Activated T-helper 2 cell treated with anti-CD3 and anti-CD28 coated beads, Interferon-gamma antibody, Interleukin-2, Interleukin-4, amounts not matched to agents 10 μg/mL and 5 μg/mL and 100 μg/mL, durations not matched to agents 14 hours and 24 hours and 36 hours (primary cell): ENCODE measurements at regions of chrX and their contacts with region 1.

Region 1: DNA sequence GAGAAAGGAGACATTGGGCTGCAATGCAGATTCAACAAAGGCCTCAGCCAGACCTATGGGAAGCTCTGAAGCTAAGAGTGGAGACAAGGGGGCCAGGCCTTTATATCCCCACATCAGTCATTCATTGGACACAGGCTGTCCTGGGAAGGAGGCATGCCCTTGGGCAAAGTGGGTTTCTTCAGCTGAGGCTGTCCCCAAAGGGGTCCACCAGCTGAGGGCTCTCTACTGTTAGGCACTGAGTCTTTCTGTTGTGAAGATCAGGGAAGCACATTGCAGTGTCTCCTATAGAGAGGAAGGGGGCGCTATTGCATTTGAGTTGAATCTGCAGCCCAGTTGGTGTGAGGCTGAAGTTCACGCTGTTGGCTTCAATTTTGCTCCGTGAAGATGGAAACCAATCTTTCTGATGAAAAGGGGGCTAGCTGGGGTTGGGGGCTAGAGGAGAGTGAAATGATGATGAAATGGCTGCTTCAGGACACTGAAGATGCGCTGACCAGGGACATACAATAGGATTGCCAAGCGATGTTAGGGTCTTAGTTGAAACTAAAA is 48.0 kb downstream of the SLC25A5 start:
- DNase-seq: peak; percentile 17
- H3K4me3 Mint-ChIP-seq: no peak overlapping the region
- H3K27ac Mint-ChIP-seq: peak overlapping the region; percentile 26
- H3K4me1 Mint-ChIP-seq: peaks cover 4% of the 10 kb centered on the region
- H3K27me3 Mint-ChIP-seq: no peaks in the 10 kb centered on the region

Region 2: DNA sequence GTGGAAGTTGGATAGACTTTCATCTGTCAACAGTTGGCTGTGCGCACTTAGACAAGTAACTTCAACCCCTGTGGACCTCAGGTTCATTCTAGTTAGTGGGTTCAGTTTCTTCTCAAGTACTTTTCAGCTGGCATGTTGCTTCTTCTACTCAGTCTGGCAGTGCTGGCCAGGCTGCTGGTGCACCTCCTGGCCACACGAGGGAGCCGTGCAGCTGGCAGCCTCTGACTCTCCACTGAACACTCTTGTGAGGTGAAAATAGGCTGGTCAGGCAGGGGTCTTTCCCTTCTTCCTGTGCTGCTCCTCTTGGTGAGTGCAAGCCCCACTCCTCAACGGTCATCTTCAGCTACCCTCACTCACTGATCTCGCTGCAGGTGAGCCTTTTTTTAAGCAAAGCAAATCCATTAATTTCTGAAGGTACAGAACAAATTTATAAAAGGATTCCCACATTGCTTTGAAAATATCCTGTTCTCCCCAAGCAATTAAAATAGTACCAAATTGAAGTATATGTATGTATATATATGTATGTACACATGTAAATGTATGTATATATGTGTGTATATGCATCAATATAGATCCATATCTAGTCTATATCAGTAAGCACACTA is 511.2 kb before region 1 on chrX:
- intact Hi-C with region 1: no loop called
- DNase-seq: peak; percentile 13
- H3K4me3 Mint-ChIP-seq: no peak overlapping the region
- H3K27ac Mint-ChIP-seq: no peak overlapping the region
- H3K4me1 Mint-ChIP-seq: no peaks in the 10 kb centered on the region
- H3K27me3 Mint-ChIP-seq: no peaks in the 10 kb centered on the region

Region 3: DNA sequence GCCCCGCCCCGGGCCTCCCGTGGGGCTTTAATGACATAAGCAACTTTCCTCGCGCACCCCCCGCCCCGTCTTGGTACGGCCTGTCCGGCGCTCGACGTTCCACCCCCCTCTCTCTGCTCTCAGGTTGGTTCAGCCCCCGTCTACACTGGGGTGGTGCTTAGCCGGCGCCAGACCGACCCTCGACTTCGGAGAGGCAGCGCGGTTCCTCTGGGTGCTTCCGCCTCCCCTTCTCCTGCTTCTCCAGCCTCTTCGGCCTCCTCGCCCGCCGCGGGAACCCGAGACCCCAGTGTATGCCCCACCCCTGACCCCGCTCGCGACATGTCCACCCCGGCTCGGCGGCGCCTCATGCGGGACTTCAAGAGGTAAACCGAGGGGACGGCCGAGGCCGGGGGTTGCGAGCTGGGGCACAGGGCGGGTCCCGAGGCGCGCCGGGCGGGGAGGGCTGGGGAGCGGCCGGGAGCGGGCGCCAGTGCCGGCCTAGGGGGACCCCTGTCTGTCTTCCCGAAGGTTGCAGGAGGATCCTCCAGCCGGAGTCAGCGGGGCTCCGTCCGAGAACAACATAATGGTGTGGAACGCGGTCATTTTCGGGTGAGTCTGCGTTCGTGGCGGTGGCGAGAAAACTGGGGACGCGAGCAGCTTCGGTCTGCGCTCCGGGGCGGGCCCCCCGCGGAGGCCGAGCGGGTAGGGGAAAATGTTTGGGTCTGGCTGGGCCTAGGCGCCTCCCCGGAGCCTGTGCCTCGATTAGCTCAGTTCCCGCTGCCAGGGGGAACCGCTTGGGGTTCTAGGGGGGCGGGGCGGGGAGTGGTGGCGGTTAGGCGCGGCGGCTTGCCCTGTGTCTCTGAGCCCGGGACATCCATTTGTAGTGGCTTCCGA is 58.4 kb after region 1 on chrX and contains the start of gene UBE2A:
- intact Hi-C with region 1: loop called (anchors 1 kb)
- DNase-seq: peak; percentile 82
- H3K4me3 Mint-ChIP-seq: peak within 1 kb of the TSS; percentile 91
- H3K27ac Mint-ChIP-seq: peak within 1 kb of the TSS; percentile 90
- H3K4me1 Mint-ChIP-seq: peaks cover 15% of the 10 kb centered on the region
- H3K27me3 Mint-ChIP-seq: no peaks in the 10 kb centered on the region
- total RNA-seq, gene UBE2A: 60.6 and 61.6 TPM in 2 replicates

Region 4: DNA sequence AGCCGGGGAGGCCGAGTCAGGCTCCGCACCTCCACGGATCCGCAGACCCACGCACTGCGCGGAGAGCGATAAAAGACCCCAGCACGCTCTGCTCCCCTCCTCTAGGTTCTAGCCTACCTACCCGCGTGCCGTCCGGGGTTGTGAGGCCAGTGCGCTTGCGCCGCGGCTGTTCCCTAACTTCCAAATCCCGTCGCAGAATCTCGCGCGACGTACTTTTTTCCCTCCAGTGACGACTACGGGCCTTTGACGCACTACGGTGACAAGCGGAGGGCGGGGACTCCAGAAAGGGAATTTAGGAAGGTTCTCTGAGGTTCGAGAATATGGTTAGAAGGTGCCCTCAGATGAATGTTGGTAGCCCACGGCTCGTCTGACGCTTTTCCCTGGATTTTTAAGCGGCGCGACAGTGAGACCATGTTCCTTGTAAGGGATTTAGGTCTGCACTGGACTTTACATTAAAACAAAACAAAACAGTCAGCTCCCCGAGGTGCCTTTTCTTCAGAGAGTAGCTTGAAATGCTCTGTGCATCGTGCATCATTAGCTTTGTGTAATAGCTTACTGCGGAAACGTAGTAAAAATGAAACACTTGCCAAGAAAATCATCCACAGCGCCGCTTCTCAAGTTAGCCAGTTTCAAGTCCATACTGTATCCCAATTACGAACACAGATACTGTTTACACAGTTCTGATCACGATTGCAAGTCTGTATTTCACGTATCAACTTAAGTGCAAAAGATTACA is 90.2 kb after region 1 on chrX and contains the start of gene NKRF:
- intact Hi-C with region 1: loop called (anchors 10 kb)
- DNase-seq: peak; percentile 86
- H3K4me3 Mint-ChIP-seq: peak within 1 kb of the TSS; percentile 97
- H3K27ac Mint-ChIP-seq: peak within 1 kb of the TSS; percentile 96
- H3K4me1 Mint-ChIP-seq: peaks cover 20% of the 10 kb centered on the region
- H3K27me3 Mint-ChIP-seq: no peaks in the 10 kb centered on the region
- total RNA-seq, gene NKRF: 25.1 and 25.9 TPM in 2 replicates

Region 5: DNA sequence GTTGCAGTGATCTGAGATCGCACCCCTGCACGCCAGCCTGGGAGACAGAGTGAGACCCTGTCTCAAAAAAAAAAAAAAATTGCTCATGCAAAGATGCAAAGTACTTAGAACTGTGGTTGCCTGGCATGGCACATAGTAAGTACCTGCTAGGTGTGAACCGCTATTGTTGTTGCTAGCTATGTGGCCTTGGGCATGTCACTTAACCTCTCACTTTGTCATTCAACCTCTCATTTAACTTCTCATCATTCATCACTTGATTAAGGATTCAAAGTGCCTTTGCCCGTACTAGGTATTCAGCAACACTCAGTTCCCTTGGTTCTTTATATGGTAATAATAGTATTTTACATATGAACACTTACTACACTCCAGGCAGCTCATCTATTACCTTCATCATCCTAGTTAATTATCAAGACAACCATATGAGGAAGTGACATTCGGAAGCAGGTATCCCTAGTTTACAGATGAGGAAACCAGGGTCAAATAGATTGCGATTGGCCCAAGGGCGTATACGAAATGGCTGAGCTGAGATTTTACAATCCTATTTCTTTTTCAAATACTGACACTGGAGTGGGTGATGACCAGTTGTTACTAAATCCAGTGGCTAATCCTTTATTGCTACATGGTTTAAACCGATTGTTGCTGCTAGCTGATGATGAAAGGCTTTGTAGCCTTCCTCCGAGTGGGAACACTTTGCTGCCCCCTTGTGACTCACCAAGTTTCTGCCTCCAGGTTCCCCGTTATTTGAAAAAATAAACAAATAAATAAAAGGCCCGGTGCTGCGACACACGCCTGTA is 213.4 kb after region 1 on chrX:
- intact Hi-C with region 1: loop called (anchors 1 kb)
- DNase-seq: peak; percentile 35
- H3K4me3 Mint-ChIP-seq: no peak overlapping the region
- H3K27ac Mint-ChIP-seq: no peak overlapping the region
- H3K4me1 Mint-ChIP-seq: peaks cover 6% of the 10 kb centered on the region
- H3K27me3 Mint-ChIP-seq: no peaks in the 10 kb centered on the region

Region 6: DNA sequence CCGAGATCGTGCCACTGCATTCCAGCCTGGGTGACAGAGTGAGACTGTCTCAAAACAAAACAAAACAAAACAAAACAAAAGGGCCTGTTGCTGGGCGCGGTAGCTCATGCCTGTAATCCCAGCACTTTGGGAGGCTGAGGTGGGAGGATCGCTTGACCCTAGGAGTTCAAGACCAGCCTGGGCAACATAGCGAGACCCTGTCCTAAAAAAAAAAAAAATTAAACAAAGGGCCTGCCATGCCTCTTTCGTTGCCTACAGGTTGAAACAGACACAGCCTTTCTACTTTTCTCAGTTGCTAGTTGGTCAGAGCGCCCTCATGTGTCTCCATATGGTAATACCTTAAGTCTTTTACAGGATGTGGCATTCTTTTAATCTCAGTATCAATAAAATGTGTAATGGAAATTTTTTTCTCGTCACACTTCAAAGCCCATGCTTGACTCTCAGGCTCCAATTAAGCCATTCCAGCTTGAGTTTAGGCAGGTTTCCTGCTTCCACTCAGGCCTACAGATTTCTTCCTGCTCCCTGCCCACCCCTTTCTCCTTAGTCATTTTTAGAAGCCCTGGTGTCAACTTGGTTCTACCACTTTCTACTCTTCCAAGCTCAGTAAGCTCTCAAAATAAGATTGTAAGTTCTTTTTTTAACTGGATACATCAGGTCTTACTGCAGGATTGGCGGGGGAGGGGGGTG is 237.5 kb after region 1 on chrX:
- intact Hi-C with region 1: loop called (anchors 10 kb)
- DNase-seq: peak; percentile 53
- H3K4me3 Mint-ChIP-seq: no peak overlapping the region
- H3K27ac Mint-ChIP-seq: peak overlapping the region; percentile 83
- H3K4me1 Mint-ChIP-seq: peaks cover 38% of the 10 kb centered on the region
- H3K27me3 Mint-ChIP-seq: no peaks in the 10 kb centered on the region